Activated CD4-positive, alpha-beta T cell treated with anti-CD3 and anti-CD28 coated beads for 36 hours (primary cell): ENCODE measurements at regions of chr17 and their contacts with region 1.

Region 1: DNA sequence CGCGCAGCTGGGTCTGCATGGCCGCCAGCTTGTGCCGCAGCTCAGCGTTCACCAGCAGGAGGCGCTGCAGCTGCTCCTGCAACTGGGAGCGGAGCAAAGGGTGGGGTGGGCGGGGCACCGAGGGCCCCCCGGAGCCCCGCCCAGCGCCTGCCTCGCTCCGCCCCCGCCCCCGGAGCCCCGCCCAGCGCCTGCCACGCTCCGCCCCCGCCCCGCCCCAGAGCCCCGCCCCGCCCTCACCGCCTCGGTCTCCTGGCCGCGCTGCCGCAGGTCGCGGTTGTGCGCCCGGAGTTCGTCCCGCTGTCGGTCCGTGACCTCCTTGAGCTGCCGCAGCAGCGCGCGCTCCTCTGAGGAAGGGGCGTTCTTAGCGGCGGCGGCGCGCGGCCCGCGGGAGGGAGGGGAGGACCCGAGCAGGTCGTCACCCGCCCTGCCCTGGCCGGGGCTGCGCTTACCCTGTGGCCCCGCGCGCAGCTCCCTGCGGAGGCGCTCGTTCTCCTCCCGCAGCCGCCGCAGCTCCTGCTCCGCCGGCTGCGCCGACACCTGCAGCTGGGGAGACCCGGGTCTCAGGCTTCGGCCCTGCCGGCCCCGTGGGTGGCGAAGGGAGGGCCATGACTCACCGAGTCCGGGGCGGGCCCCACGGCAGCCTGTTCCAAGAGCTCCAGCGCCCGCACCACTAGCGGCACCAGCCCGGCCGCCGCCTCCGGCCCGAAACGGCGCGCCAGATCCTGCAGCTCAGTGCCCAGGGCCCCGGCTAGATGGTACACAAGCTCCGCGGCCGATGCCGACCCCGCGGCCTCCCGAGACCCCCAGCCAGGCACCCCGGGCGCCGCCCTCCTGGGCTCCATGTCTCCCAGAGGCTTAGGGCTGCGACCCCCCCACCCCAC is 463 bp downstream of the RILP start:
- DNase-seq: peak; percentile 97
- ATAC-seq: peak; percentile 74
- H3K4me3 Mint-ChIP-seq: peak overlapping the region; percentile 43
- H3K27ac Mint-ChIP-seq: no peak overlapping the region
- H3K4me1 Mint-ChIP-seq: peaks cover 25% of the 10 kb centered on the region
- H3K27me3 Mint-ChIP-seq: no peaks in the 10 kb centered on the region

Region 2: DNA sequence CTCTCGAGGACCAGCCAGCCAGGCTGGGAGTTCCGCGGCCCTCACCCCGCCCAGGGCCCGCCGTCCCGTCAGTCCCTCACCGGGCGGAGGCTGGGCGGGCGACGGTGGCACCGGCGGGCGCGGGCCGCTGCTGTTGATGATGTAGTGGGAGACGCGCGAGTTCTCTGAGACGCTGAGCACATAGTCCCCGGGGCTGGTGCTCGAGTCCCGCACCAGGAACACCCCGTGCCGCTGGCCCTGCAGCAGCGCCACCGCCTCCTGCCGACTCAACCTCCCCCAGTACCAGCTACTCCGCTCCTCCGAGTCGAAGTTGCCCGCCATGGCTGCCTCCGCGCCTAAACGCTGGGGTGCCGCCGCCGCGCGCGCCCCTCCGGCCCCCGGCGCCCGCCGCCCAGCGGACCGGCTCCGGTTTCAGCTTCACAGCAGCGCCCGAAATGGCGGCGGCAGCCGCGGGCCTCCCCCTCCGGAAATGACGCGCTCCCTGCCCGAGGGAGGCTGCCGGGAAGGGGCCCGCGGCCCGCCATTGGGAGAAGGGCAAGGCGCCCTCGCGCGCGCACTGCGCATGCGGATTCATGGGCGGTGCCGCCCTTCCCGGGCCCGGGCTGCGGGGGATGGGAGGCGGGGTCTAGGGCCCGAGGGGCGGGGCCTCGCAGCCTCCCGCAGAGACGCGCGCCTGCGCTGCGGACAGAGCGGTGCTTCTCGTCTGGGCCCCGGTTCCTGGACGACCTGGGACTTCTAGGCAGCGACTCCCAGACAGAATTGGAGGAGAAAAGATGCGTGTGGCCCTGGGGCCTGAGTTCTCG is 193.2 kb before region 1 on chr17 and contains the start of gene CRK:
- CTCF ChIA-PET with region 1: interaction called, 4 read pairs
- POLR2A ChIA-PET with region 1: no interaction called
- intact Hi-C with region 1: loop called in 1 of 2 experiments (anchors 2 kb)
- DNase-seq: peak; percentile 99
- ATAC-seq: peak; percentile 93
- H3K4me3 Mint-ChIP-seq: peak within 1 kb of the TSS; percentile 82
- H3K27ac Mint-ChIP-seq: peak within 1 kb of the TSS; percentile 89
- H3K4me1 Mint-ChIP-seq: peaks cover 46% of the 10 kb centered on the region
- H3K27me3 Mint-ChIP-seq: peaks cover 9% of the 10 kb centered on the region
- total RNA-seq, gene CRK: 10.1 to 11.6 TPM

Region 3: GRCh38 chr17:1628856-1629646 is 20.2 kb before region 1 on chr17:
- CTCF ChIA-PET with region 1: interaction called, 14 read pairs
- POLR2A ChIA-PET with region 1: interaction called, 4 read pairs
- intact Hi-C with region 1: loop called in 1 of 2 experiments (anchors 1 kb)
- DNase-seq: peak; percentile 93
- ATAC-seq: peak; percentile 80
- H3K4me3 Mint-ChIP-seq: peak overlapping the region; percentile 76
- H3K27ac Mint-ChIP-seq: peak overlapping the region; percentile 56
- H3K4me1 Mint-ChIP-seq: peaks cover 7% of the 10 kb centered on the region
- H3K27me3 Mint-ChIP-seq: peaks cover 12% of the 10 kb centered on the region

Region 4: GRCh38 chr17:1769822-1770477 is 120.7 kb after region 1 on chr17:
- CTCF ChIA-PET with region 1: no interaction called
- POLR2A ChIA-PET with region 1: no interaction called
- intact Hi-C with region 1: no loop called
- DNase-seq: peak; percentile 27
- ATAC-seq: peak; percentile 53
- H3K4me3 Mint-ChIP-seq: peak overlapping the region; percentile 8
- H3K27ac Mint-ChIP-seq: peak overlapping the region; percentile 19
- H3K4me1 Mint-ChIP-seq: peaks cover 16% of the 10 kb centered on the region
- H3K27me3 Mint-ChIP-seq: no peaks in the 10 kb centered on the region

Region 5: GRCh38 chr17:1908699-1909309 is 259.6 kb after region 1 on chr17:
- CTCF ChIA-PET with region 1: no interaction called
- POLR2A ChIA-PET with region 1: no interaction called
- intact Hi-C with region 1: no loop called
- DNase-seq: peak; percentile 66
- ATAC-seq: peak; percentile 85
- H3K4me3 Mint-ChIP-seq: no peak overlapping the region
- H3K27ac Mint-ChIP-seq: no peak overlapping the region
- H3K4me1 Mint-ChIP-seq: peaks cover 2% of the 10 kb centered on the region
- H3K27me3 Mint-ChIP-seq: peaks cover 51% of the 10 kb centered on the region

Region 6: DNA sequence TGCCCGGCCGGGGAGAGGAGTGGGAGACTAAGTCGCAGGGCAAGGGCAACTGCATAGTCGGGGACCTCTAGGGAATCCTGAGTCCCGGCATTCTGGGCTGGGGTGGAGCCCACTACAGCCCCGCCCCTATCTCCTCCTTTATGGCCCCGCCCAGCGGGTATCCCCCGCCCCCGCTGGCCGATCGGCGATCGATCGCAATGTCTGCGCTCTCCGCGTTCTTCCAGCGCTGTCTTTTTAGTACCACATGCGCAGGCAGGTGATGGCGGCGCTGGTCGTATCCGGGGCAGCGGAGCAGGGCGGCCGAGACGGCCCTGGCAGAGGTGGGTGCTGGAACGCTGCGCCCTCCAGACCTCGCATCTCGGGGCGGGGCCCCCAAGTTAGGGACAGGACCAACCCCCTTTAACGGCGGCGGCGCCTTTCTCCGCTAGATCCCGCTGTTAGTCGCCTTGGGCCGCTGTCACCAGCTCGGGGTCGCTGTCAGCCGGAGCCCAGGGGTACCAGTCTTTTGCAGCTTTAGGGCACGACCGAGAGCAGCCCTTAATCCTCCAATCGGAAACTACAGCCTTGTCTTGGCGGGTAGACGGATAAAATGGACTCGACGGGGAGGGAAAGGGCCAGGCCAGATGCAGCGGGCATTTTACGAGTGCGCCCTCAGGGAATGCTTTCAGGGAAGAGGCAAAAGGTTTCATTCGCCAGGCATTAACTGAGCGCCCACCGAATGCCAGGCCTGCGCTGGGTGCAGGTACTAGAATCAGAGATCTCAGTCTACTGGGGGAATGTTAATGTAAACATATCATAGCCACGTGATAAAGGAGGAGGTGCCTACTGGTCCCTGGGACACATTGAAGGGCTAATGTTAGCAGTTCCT is 380.9 kb after region 1 on chr17 and contains the start of gene DPH1:
- CTCF ChIA-PET with region 1: interaction called, 6 read pairs
- POLR2A ChIA-PET with region 1: no interaction called
- intact Hi-C with region 1: loop called in 1 of 2 experiments (anchors 1 kb)
- DNase-seq: peak; percentile 94
- ATAC-seq: peak; percentile 91
- H3K4me3 Mint-ChIP-seq: peak within 1 kb of the TSS; percentile 88
- H3K27ac Mint-ChIP-seq: peak within 1 kb of the TSS; percentile 78
- H3K4me1 Mint-ChIP-seq: peaks cover 24% of the 10 kb centered on the region
- H3K27me3 Mint-ChIP-seq: peaks cover 20% of the 10 kb centered on the region
- total RNA-seq, gene DPH1: 29.1 to 37.0 TPM

Region 7: GRCh38 chr17:2392252-2393173 is 743.3 kb after region 1 on chr17:
- CTCF ChIA-PET with region 1: no interaction called
- POLR2A ChIA-PET with region 1: no interaction called
- intact Hi-C with region 1: loop called in 1 of 2 experiments (anchors 1 kb)
- DNase-seq: peak; percentile 99
- ATAC-seq: peak; percentile 72
- H3K4me3 Mint-ChIP-seq: peak overlapping the region; percentile 80
- H3K27ac Mint-ChIP-seq: peak overlapping the region; percentile 94
- H3K4me1 Mint-ChIP-seq: peaks cover 52% of the 10 kb centered on the region
- H3K27me3 Mint-ChIP-seq: no peaks in the 10 kb centered on the region